Esophagus muscularis mucosa (tissue), 4 donors: ENCODE measurements at regions of chr19 and their contacts with region 1.

Region 1: DNA sequence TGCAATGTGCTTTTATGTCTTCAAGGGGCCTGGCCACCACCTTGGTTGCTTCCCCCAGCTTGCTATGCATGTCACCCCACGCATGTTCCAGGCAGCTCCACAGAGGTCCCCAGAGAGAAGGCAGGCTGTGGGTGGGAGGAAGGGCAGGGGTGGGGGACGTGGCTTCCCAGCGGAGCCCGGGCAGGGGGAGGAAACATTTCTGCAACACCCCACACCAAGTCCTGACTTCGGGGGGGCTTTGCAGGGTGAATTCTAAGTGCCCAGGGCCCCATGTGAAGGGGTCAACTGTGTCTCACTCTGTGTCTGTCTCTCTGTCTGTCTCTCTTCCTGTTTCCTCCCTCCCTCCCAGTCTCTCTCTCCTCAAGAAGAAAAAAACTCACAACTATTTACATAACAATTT is 39.6 kb downstream of the LTBP4 start:
- DNase-seq: no peak
- H3K4me3 ChIP-seq: no peak overlapping the region
- H3K27ac ChIP-seq: peak overlapping the region; percentile 19 to 67 (median 46)
- H3K4me1 ChIP-seq: peaks cover 17 to 34% (median 27%) of the 10 kb centered on the region in 4 donors
- H3K27me3 ChIP-seq: no peaks in the 10 kb centered on the region
- CTCF ChIP-seq: no peak
- EP300 ChIP-seq: no peak
- POLR2A ChIP-seq: no peak

Region 2: GRCh38 chr19:40616941-40617340 is 23.8 kb before region 1 on chr19:
- intact Hi-C with region 1: loop called (anchors 2 kb)
- DNase-seq: no peak
- H3K4me3 ChIP-seq: no peak overlapping the region
- H3K27ac ChIP-seq: peak overlapping the region in 1 of 4 donors; percentile 36
- H3K4me1 ChIP-seq: peaks cover 15 to 39% (median 29%) of the 10 kb centered on the region in 4 donors
- H3K27me3 ChIP-seq: peaks cover 0 to 9% (median 5%) of the 10 kb centered on the region in 4 donors
- CTCF ChIP-seq: no peak
- EP300 ChIP-seq: no peak
- POLR2A ChIP-seq: no peak